Right cardiac atrium (tissue), 5 donors: ENCODE measurements at regions of chr9 and their contacts with region 1.

Region 1: DNA sequence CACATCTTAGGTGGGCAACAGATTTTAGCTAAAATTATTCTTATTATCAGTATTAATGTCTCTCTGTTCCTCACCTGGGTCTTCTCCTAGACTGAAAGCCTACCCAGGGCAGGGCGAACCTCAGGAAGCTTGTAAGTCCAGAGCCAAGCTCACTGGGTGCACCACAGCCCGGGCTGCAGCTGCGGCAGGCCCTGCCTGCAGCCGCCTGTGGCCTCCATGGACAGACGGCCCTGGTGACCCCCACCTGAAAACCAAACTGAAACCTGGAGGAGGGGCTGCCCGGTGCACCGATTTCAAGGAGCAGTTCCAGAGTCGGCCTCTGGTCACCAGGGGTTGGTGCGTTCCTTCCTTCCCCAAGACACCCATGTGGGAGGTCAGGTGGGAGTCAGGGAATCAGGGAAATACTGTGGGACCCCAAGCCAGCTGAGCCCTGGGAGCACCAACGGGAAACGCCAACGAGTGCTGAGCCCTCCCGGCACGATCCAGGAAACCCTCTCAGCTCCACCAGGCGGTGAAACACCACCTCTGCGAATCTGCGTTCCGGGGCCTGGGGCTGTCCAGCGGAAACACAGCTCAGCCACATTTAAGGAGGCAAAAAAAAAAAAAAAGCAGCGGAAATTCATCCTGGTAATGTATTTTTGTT is 68.6 kb upstream of the PPP1R26 start:
- DNase-seq: peak in 1 of 3 donors; percentile 30
- ATAC-seq: no peak
- H3K4me3 ChIP-seq: no peak overlapping the region
- H3K27ac ChIP-seq: no peak overlapping the region
- H3K4me1 ChIP-seq: no peaks in the 10 kb centered on the region
- H3K27me3 ChIP-seq: no peaks in the 10 kb centered on the region

Region 2: GRCh38 chr9:134698587-134699342 is 712.2 kb before region 1 on chr9:
- intact Hi-C with region 1: loop called in 2 of 4 experiments (anchors 5 to 10 kb)
- DNase-seq: peak; percentile 72 to 88 (median 86)
- ATAC-seq: peak; percentile 68 to 71
- H3K4me3 ChIP-seq: no peak overlapping the region
- H3K27ac ChIP-seq: no peak overlapping the region
- H3K4me1 ChIP-seq: no peaks in the 10 kb centered on the region
- H3K27me3 ChIP-seq: no peaks in the 10 kb centered on the region

Region 3: DNA sequence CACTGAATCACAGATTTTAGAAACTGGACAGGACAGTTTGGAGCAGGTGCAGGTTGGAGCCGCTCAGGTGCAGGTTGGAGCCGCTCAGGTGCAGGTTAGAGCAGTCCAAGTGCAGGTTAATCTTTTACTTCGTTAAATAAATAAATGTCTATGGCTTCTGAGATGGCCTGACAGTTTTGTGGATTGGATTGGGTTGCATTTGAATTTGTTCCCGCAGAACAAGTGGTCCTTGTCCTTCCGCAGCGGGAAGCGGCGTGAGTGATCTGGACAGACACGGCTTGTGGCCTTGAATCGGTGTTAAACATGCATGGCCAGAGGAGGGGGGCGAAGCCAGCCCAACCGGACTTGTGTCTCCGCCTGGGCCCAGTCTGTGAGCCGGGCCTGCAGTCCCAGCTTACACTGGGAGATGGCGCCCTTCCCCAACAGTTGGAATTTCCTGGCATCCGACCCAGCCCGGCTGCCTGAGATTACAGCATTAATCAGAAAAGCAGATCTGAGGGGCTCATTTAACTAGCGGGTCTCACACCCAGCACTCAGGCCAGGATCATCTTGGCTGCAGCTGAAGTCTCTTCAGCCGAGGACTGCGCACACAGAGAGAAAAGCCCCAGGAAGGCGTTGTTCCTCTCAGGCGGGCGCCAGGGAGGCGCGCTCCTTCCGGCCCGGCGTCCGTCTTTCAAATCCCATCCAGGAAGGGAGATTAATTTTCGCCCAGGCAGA is 325.0 kb before region 1 on chr9:
- intact Hi-C with region 1: loop called (anchors 1 to 5 kb)
- DNase-seq: peak; percentile 76 to 93 (median 90)
- ATAC-seq: peak; percentile 71 to 72
- H3K4me3 ChIP-seq: peak overlapping the region; percentile 30
- H3K27ac ChIP-seq: no peak overlapping the region
- H3K4me1 ChIP-seq: no peaks in the 10 kb centered on the region
- H3K27me3 ChIP-seq: no peaks in the 10 kb centered on the region

Region 4: DNA sequence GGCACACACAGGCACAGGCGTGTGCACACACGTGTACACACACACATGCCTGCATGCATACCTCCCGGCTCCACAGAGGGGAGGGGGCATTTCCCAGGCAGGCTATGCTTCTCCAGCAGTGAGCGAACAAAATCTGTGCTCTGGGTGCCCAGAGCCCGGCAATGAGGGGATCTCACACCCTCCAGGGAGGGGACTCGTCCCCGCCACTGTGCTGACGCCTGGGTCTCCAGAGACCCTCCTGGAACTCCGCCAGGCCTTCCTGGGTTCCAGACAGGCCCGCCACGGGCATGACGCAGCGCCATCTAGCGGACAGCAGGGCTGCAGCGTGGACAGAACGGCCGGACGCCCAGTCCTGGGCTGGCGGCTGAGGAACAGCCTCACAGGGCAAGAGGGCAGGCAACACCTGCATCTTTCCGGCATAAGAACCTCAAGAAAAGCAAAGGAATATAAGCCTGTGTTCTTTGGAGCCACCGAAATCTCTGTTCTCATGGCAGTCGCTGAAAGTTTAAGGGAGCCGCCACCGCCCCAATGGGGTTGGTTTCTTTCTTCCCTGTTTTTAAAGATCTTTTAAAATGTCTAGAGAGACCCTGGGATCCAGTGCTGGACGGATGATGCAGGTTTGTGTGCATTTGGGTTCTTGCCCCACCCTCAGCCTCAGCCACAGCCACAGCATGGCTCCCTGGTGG is 67.0 kb before region 1 on chr9:
- intact Hi-C with region 1: loop called in 1 of 4 experiments (anchors 5 kb)
- DNase-seq: peak; percentile 74 to 92 (median 90)
- ATAC-seq: peak; percentile 61 to 68
- H3K4me3 ChIP-seq: no peak overlapping the region
- H3K27ac ChIP-seq: no peak overlapping the region
- H3K4me1 ChIP-seq: no peaks in the 10 kb centered on the region
- H3K27me3 ChIP-seq: no peaks in the 10 kb centered on the region

Region 5: DNA sequence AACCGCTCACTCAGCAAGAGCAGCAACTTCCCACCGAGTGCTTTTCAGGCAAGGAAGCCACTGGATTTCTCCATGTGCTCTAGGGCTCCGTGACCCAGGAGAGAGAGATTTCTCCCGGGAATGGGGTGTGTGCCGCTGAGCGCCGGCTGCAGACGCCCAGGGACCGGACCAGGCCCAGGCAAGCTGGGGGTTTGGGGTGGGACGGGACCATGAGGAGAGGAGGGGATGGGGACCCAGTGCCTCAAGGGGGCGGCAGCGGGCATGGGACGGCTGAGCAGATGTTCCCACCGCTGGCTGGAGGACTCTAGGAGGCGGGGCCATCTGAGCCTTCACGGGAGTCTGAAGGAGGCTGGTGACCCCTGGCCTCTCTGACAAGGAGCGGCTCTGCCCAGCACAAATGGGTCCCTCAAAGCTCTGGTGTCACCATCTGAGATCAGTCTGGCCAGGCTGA is 260.7 kb after region 1 on chr9:
- intact Hi-C with region 1: no loop called
- DNase-seq: peak in 1 of 3 donors; percentile 3
- ATAC-seq: no peak
- H3K4me3 ChIP-seq: no peak overlapping the region
- H3K27ac ChIP-seq: no peak overlapping the region
- H3K4me1 ChIP-seq: no peaks in the 10 kb centered on the region
- H3K27me3 ChIP-seq: no peaks in the 10 kb centered on the region

Region 6: DNA sequence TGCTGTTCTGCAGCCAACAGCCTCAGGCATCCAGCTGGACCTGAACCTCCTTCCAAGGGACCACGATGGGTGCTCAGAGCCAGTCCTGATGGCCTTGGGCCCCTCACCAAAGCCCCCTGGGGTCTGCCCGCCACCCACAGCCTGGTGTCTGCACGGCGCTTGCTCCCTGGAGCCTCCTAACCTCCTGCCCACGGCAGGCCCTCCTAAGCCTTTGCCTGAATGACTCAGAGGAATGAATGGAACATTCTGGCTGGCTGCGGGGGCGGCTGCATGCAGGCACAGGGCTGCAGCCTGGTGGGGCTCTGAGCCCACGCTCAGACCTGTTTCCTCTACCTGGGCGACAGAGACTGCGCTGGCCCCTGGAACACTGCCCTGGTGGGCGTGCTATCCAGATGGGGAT is 281.5 kb after region 1 on chr9:
- intact Hi-C with region 1: no loop called
- DNase-seq: no peak
- ATAC-seq: no peak
- H3K4me3 ChIP-seq: no peak overlapping the region
- H3K27ac ChIP-seq: no peak overlapping the region
- H3K4me1 ChIP-seq: no peaks in the 10 kb centered on the region
- H3K27me3 ChIP-seq: no peaks in the 10 kb centered on the region